ENCODE measurements at regions of chr15 and their contacts with region 1.

Region 1: GRCh38 chr15:54659646-54660045 is 537.1 kb downstream of the RSL24D1 start:
- DNase-seq: no peak
- ATAC-seq: no peak
- H3K4me3 ChIP-seq: no peak overlapping the region
- H3K27ac ChIP-seq: no peak overlapping the region
- H3K4me1 ChIP-seq: no peaks in the 10 kb centered on the region
- H3K27me3 ChIP-seq: no peaks in the 10 kb centered on the region

Region 2: GRCh38 chr15:54481819-54482218 is 177.8 kb before region 1 on chr15:
- intact Hi-C with region 1: no loop called
- DNase-seq: peak in 1 of 3 donors; percentile 12
- ATAC-seq: no peak
- H3K4me3 ChIP-seq: no peak overlapping the region
- H3K27ac ChIP-seq: no peak overlapping the region
- H3K4me1 ChIP-seq: no peaks in the 10 kb centered on the region
- H3K27me3 ChIP-seq: no peaks in the 10 kb centered on the region

Region 3: DNA sequence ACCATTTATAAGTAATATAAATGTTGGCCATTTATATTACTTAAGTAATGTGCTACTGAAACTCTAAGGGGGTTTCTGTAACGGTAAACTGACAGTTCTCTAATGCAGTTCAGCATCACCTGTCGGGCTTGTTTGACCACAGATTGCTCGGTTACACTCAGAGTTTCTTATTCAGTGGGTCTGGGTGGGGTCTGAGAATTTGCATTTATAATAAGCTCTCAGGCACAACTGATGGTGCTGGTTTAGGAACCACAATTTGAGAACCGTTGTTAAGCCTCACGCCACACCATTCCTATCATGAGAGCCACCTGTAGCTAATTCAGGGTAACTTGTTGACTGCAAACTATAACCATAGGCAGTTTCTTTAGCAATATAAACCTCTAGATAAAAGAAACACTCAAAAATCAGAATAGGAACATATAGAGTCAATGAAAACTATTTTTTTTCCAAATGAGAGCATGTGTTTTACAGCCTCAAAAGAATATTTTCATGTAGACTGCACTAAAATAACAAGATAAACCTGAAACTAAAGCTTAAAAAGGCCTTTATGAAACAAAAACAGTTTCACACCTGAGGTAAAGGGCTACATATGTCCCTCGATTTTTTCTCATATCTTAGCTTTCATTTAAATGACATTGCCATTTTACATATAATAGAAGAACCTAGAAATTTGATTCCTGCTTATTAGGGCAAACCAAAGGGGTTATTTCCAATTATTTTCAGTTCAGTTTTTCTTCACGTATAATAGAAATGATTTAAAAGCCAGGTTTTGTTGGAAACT is 76.6 kb before region 1 on chr15:
- intact Hi-C with region 1: no loop called
- DNase-seq: no peak
- ATAC-seq: no peak
- H3K4me3 ChIP-seq: no peak overlapping the region
- H3K27ac ChIP-seq: no peak overlapping the region
- H3K4me1 ChIP-seq: no peaks in the 10 kb centered on the region
- H3K27me3 ChIP-seq: no peaks in the 10 kb centered on the region

Region 4: GRCh38 chr15:54605043-54605442 is 54.6 kb before region 1 on chr15:
- intact Hi-C with region 1: loop called in 1 of 4 experiments (anchors 10 kb)
- DNase-seq: no peak
- ATAC-seq: no peak
- H3K4me3 ChIP-seq: no peak overlapping the region
- H3K27ac ChIP-seq: no peak overlapping the region
- H3K4me1 ChIP-seq: no peaks in the 10 kb centered on the region
- H3K27me3 ChIP-seq: no peaks in the 10 kb centered on the region

Measured in right cardiac atrium (tissue), 5 donors.